IMR-90 (cell line): ENCODE measurements at regions of chr7 and their contacts with region 1.

Region 1: DNA sequence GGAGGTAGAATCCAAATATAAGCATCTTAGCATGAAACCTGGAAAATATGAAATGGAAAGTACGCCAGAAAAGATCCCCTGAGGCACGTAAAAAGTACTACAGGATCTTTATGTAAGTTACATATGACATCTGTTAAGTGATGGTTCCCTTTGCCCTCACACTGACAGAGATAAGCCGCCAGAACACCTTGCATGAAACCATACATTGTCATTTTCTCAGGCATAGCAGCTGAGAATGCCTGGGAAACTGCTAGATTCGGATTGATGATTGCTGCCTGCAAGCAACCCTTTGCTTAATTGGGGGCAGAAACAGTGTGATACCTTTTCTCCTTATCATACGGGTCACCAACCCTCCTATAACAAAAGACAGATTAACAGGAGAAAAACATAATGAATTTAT is 826.6 kb upstream of the LRRN3 start:
- DNase-seq: no peak
- ATAC-seq: no peak
- H3K4me3 ChIP-seq: no peak overlapping the region
- H3K27ac ChIP-seq: no peak overlapping the region
- H3K4me1 ChIP-seq: no peaks in the 10 kb centered on the region
- H3K27me3 ChIP-seq: no peaks in the 10 kb centered on the region
- CTCF ChIP-seq: no peak
- POLR2A ChIP-seq: no peak
- RAD21 ChIP-seq: no peak

Region 2: DNA sequence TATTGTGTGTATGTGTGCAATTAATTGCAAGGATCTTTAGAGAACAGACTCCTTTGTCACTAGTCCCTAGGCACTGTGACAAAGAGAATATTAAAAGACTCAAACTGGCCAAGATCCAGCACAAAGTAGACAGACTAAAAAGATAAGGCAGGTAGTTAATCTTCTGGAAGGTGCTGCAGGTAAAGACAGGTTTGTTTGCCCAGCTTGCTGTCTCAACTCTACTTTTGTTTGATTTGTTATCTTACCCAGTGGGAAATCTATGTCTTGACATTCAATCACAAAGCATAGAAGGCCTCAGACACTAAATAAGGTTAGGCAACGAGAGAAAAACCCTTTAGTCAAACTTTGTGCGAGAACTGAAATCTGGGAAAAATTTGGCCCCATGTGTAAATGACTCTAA is 18.8 kb after region 1 on chr7:
- CTCF ChIA-PET with region 1: no interaction called
- POLR2A ChIA-PET with region 1: no interaction called
- dilution Hi-C with region 1: no loop called
- in situ Hi-C with region 1: no loop called
- intact Hi-C with region 1: loop called (anchors 1 kb)
- DNase-seq: no peak
- ATAC-seq: no peak
- H3K4me3 ChIP-seq: no peak overlapping the region
- H3K27ac ChIP-seq: no peak overlapping the region
- H3K4me1 ChIP-seq: no peaks in the 10 kb centered on the region
- H3K27me3 ChIP-seq: no peaks in the 10 kb centered on the region
- CTCF ChIP-seq: no peak
- POLR2A ChIP-seq: no peak
- RAD21 ChIP-seq: no peak

Region 3: GRCh38 chr7:110486549-110486948 is 222.3 kb after region 1 on chr7:
- CTCF ChIA-PET with region 1: no interaction called
- POLR2A ChIA-PET with region 1: no interaction called
- dilution Hi-C with region 1: no loop called
- in situ Hi-C with region 1: no loop called
- intact Hi-C with region 1: no loop called
- DNase-seq: no peak
- ATAC-seq: no peak
- H3K4me3 ChIP-seq: no peak overlapping the region
- H3K27ac ChIP-seq: no peak overlapping the region
- H3K4me1 ChIP-seq: no peaks in the 10 kb centered on the region
- H3K27me3 ChIP-seq: no peaks in the 10 kb centered on the region
- CTCF ChIP-seq: no peak
- POLR2A ChIP-seq: no peak
- RAD21 ChIP-seq: no peak